ENCODE measurements at regions of chr2 and their contacts with region 1.

Region 1: DNA sequence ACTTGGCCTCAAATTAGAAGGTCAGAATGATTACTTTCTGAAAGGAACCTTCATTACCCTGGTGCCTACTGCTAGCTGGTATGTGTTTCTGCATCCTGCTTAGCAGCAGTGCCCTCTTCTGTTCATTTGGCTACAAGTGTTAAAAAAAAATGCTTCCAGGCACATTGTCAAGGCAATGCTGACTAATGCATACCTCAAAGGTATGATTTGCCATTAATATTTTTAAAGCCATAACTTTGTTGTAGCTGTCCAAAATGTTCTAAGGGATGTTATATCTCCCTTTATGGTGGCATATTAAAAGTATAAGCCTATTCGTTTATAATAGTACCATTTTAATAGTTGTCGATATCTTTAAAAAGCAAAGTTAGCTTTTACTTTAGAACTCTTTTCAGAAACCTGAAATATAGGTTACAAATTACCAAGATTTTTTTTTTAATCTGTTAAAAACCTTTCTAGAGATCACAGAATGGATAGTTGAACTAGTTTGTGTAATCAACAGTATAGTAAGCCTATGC is 52.0 kb upstream of the FAM171B start:
- DNase-seq: peak; percentile 21
- ATAC-seq: peak; percentile 91
- H3K4me3 ChIP-seq: no peak overlapping the region
- H3K27ac ChIP-seq: no peak overlapping the region
- H3K4me1 ChIP-seq: peaks cover 30% of the 10 kb centered on the region
- H3K27me3 ChIP-seq: no peaks in the 10 kb centered on the region
- CTCF ChIP-seq: peak; percentile 62 to 84 (median 76)
- EP300 ChIP-seq: no peak
- POLR2A ChIP-seq: no peak
- RAD21 ChIP-seq: peak; percentile 95

Region 2: DNA sequence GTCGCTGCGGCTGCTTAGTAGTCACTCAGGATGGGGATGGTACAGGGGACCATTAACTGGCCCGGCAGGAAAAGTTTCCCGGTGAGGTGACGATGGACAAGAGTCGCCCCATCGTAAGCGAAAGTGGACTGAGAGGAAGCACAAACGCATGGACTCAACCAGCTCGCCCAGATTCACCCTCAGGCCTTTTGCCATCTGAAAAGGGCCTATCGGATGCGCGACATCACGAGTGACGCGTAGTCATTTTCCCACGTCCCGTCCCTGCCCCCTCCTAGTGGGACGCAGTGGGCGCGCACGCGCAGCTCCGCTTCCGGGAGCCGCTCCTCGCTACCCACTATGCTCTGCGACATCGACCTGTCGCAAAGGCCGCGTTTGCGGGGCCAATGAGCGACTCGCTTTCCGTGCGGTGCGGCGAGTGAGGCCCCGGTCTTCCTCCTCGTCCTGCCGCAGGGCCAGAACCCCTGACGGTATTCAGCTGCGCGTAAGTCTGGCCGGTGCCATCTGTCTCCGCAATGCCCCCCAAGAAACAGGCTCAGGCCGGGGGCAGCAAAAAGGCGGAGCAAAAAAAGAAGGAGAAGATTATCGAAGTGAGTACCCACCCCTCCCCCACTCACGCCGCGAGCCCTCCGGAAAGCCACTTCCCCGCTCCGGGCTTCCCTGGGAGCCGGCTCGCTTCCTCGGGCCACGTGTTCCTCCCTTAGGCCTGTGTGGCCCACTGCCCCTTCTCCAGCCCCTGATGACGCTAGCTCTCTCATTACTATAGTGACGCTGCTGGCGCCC is 155.8 kb before region 1 on chr2 and contains the start of gene ZC3H15:
- CTCF ChIA-PET with region 1: interaction called, 13 read pairs
- POLR2A ChIA-PET with region 1: no interaction called
- RAD21 ChIA-PET with region 1: interaction called, 5 read pairs
- SMC1A ChIA-PET with region 1: interaction called, 14 read pairs
- in situ Hi-C with region 1: no loop called
- intact Hi-C with region 1: no loop called
- DNase-seq: peak; percentile 97
- ATAC-seq: peak; percentile 79
- H3K4me3 ChIP-seq: peak within 1 kb of the TSS; percentile 86
- H3K27ac ChIP-seq: peak within 1 kb of the TSS; percentile 97
- H3K4me1 ChIP-seq: 0 out of 2 replicates have a peak, but pooled peaks cover 4% of the 10 kb centered on the region
- H3K27me3 ChIP-seq: no peaks in the 10 kb centered on the region
- CTCF ChIP-seq: no peak
- EP300 ChIP-seq: no peak
- POLR2A ChIP-seq: peak; percentile 97
- RAD21 ChIP-seq: no peak
- polyA plus RNA-seq, gene ZC3H15: 115 to 122 TPM

Region 3: DNA sequence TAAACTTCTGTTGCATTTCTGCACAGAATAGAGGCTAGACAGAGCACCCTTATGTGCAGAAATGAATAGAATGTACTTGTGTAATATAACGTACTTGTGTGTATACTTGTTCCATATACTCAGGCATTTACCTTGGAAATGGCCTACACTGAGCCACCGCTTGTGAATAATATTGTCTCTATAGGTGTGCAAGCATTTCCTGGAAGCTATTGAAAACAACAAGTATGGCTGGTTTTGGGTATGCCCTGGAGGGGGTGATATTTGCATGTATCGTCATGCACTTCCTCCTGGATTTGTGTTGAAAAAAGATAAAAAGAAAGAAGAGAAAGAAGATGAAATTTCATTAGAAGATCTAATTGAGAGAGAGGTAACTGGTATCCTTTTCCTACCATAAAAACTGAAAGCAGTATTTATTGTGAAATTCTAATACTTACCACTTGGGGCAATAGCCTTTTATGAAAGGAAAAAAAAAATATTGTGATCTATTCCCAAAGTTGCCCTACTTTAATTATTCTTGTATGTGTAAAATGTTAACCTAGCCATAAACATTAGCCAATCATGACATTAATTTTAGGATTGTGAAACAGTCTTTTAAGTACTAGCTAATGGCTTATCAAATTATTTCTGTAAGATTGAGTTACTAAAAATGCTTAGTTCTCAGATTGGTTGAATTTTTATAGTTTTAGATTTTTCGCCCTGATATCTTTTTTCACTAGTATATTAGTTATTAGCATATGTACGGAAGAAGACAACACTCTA is 137.8 kb before region 1 on chr2:
- CTCF ChIA-PET with region 1: interaction called, 244 read pairs
- POLR2A ChIA-PET with region 1: interaction called, 3 read pairs
- RAD21 ChIA-PET with region 1: interaction called, 94 read pairs
- SMC1A ChIA-PET with region 1: interaction called, 115 read pairs
- in situ Hi-C with region 1: loop called (anchors 5 kb)
- intact Hi-C with region 1: loop called (anchors 1 kb)
- DNase-seq: no peak
- ATAC-seq: peak; percentile 67
- H3K4me3 ChIP-seq: no peak overlapping the region
- H3K27ac ChIP-seq: no peak overlapping the region
- H3K4me1 ChIP-seq: no peaks in the 10 kb centered on the region
- H3K27me3 ChIP-seq: no peaks in the 10 kb centered on the region
- CTCF ChIP-seq: peak in 2 of 3 experiments; percentile 18 to 45; a peak in 3 of 6 replicates
- EP300 ChIP-seq: no peak
- POLR2A ChIP-seq: no peak
- RAD21 ChIP-seq: peak; percentile 48

Region 4: DNA sequence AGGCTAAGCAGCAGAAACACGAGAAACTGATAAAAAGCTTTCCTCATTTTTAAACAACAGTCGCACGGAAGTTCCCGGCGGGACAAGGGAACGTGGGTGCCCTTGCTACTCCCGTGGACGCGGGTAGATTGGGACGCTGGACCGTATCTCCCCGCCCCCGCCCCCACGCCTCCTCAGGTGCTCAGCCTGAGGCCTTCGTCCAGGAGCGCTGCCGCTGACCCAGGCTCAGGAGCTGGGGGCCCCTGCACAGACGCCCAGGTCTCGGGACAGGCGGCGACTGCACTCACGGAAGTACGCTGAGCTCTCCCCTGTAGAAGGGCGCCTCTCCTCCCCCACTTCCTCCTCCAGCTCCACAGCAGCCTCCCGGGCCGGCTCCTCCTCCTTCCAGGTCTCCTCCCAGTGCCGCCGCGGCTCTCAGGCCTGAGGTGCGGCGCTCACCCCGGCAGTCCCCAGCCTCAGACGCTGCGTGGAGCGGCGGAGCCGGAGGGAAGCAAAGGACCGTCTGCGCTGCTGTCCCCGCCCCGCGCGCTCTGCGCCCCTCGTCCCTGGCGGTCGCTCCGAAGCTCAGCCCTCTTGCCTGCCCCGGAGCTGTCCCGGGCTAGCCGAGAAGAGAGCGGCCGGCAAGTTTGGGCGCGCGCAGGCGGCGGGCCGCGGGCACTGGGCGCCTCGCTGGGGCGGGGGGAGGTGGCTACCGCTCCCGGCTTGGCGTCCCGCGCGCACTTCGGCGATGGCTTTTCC is 52.1 kb before region 1 on chr2 and contains the start of gene ITGAV:
- CTCF ChIA-PET with region 1: interaction called, 10 read pairs
- POLR2A ChIA-PET with region 1: no interaction called
- RAD21 ChIA-PET with region 1: interaction called, 10 read pairs
- SMC1A ChIA-PET with region 1: interaction called, 4 read pairs
- in situ Hi-C with region 1: no loop called
- intact Hi-C with region 1: no loop called
- DNase-seq: peak; percentile 57
- ATAC-seq: peak; percentile 93
- H3K4me3 ChIP-seq: peak within 1 kb of the TSS; percentile 95
- H3K27ac ChIP-seq: peak within 1 kb of the TSS; percentile 89
- H3K4me1 ChIP-seq: peaks cover 6% of the 10 kb centered on the region; the same call in 1 of the 2 replicates
- H3K27me3 ChIP-seq: no peaks in the 10 kb centered on the region
- CTCF ChIP-seq: no peak
- EP300 ChIP-seq: no peak
- POLR2A ChIP-seq: peak; percentile 99
- RAD21 ChIP-seq: no peak
- polyA plus RNA-seq, gene ITGAV: 2.1 to 2.2 TPM

Region 5: DNA sequence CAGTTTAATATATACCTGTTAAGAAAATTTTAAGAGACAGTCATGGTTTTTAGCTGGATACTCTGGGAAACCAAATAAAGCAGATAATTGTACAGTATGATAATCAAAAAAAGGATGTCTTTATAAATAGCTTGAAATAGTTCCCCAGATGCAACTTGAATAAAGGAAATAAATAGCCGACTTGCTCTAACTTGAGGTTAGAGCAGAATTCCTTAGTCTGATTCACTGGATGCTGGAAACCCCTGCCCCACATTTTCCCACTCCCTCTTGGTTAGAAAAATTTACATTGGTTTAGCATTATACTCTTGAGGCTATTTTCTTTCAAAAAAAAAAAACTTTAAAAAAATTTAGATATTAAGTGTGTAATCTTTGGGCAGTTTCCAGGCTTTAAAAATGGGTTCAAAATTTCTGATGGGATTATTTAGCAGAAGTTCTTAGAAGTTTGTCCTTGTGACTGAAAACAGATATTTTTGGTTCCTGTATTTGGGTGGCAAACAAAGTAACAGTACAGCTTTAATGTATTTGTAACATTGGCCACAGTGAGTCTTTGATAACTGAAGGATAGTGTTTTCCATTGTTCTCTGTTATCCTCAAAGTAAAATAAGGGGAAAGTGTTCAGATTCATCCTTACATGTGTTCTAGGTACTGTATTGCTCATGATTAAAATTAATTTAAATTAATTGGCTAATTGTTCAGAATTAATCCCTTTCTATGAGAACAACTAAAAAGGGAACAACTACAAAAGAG is 12.4 kb before region 1 on chr2:
- CTCF ChIA-PET with region 1: interaction called, 13 read pairs
- POLR2A ChIA-PET with region 1: no interaction called
- RAD21 ChIA-PET with region 1: no interaction called
- SMC1A ChIA-PET with region 1: interaction called, 6 read pairs
- in situ Hi-C with region 1: no loop called
- intact Hi-C with region 1: no loop called
- DNase-seq: no peak
- ATAC-seq: no peak
- H3K4me3 ChIP-seq: no peak overlapping the region
- H3K27ac ChIP-seq: no peak overlapping the region
- H3K4me1 ChIP-seq: no peaks in the 10 kb centered on the region
- H3K27me3 ChIP-seq: no peaks in the 10 kb centered on the region
- CTCF ChIP-seq: no peak
- EP300 ChIP-seq: no peak
- POLR2A ChIP-seq: no peak
- RAD21 ChIP-seq: no peak

Region 6: GRCh38 chr2:186780701-186781348 is 139.0 kb after region 1 on chr2:
- CTCF ChIA-PET with region 1: interaction called, 7 read pairs
- POLR2A ChIA-PET with region 1: interaction called, 3 read pairs
- RAD21 ChIA-PET with region 1: interaction called, 8 read pairs
- SMC1A ChIA-PET with region 1: interaction called, 11 read pairs
- in situ Hi-C with region 1: no loop called
- intact Hi-C with region 1: no loop called
- DNase-seq: no peak
- ATAC-seq: peak; percentile 91
- H3K4me3 ChIP-seq: no peak overlapping the region
- H3K27ac ChIP-seq: no peak overlapping the region
- H3K4me1 ChIP-seq: no peaks in the 10 kb centered on the region
- H3K27me3 ChIP-seq: no peaks in the 10 kb centered on the region
- CTCF ChIP-seq: peak; percentile 21 to 45 (median 28); a peak in 4 of 6 replicates
- EP300 ChIP-seq: no peak
- POLR2A ChIP-seq: no peak
- RAD21 ChIP-seq: peak; percentile 71